Panc1 (cell line): ENCODE measurements at regions of chr11 and their contacts with region 1.

Region 1: GRCh38 chr11:117946842-117947526 is 17.8 kb upstream of the TMPRSS13 start:
- DNase-seq: peak; percentile 82
- ATAC-seq: peak; percentile 98
- H3K4me3 ChIP-seq: no peak overlapping the region
- H3K27ac ChIP-seq: no peak overlapping the region
- H3K4me1 ChIP-seq: no peaks in the 10 kb centered on the region
- H3K27me3 ChIP-seq: peaks cover 15% of the 10 kb centered on the region
- CTCF ChIP-seq: peak; percentile 98

Region 2: GRCh38 chr11:117817368-117818040 is 129.5 kb before region 1 on chr11:
- CTCF ChIA-PET with region 1: interaction called, 14 read pairs
- POLR2A ChIA-PET with region 1: no interaction called
- in situ Hi-C with region 1: no loop called
- intact Hi-C with region 1: loop called (anchors 1 kb)
- DNase-seq: peak; percentile 69
- ATAC-seq: peak; percentile 77
- H3K4me3 ChIP-seq: no peak overlapping the region
- H3K27ac ChIP-seq: 0 out of 2 replicates have a peak overlapping the region, but pooled peaks have one; percentile 4
- H3K4me1 ChIP-seq: peaks cover 20% of the 10 kb centered on the region
- H3K27me3 ChIP-seq: no peaks in the 10 kb centered on the region; the same call in 1 of the 2 replicates
- CTCF ChIP-seq: peak; percentile 100

Region 3: DNA sequence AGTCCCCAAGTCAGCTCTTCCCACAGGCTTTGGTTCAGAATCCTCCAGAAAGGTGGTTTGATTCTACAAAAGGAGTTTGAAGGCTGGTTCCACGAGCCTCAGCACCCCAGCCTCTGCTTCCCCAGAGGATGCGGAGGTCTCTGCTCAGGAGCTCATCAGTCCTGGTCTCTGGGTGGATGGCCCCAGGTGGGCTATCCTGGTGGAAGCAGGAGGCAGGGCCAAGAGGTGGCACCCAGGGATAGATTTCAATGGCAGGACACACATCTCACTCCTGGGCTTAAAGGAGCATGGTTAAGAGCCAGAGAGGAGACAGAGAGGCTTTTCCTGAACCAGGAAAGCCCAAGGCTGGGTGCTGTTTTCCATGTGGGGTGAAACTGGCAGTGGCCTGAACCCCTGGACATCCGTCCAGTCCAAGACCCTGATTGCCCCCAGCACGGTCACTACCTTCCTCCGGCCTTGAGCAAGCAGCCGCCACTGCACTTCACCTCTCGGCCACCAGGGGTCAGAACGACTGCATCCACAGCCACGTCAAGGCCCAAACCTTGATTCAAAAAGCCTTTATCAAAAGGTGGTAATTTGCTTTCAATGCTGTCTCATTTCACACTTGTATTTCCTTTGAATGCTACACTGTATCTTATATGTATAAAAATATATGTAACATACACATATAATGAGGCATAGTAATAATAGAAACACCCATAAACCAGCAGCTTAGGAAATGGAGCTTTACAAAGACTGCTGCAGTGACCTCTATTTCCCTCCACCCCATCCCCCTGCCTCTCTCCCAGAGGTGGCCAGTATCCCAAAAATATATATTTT is 103.1 kb before region 1 on chr11:
- CTCF ChIA-PET with region 1: interaction called, 34 read pairs
- POLR2A ChIA-PET with region 1: no interaction called
- in situ Hi-C with region 1: no loop called
- intact Hi-C with region 1: loop called (anchors 1 kb)
- DNase-seq: peak; percentile 54
- ATAC-seq: peak; percentile 90
- H3K4me3 ChIP-seq: no peak overlapping the region
- H3K27ac ChIP-seq: no peak overlapping the region
- H3K4me1 ChIP-seq: no peaks in the 10 kb centered on the region
- H3K27me3 ChIP-seq: peaks cover 20% of the 10 kb centered on the region
- CTCF ChIP-seq: peak; percentile 98

Region 4: GRCh38 chr11:118051611-118052461 is 104.9 kb after region 1 on chr11:
- CTCF ChIA-PET with region 1: interaction called, 12 read pairs
- POLR2A ChIA-PET with region 1: interaction called, 7 read pairs
- in situ Hi-C with region 1: no loop called
- intact Hi-C with region 1: loop called (anchors 1 kb)
- DNase-seq: no peak
- ATAC-seq: no peak
- H3K4me3 ChIP-seq: no peak overlapping the region
- H3K27ac ChIP-seq: no peak overlapping the region
- H3K4me1 ChIP-seq: no peaks in the 10 kb centered on the region
- H3K27me3 ChIP-seq: peaks cover 9% of the 10 kb centered on the region; the same call in 1 of the 2 replicates
- CTCF ChIP-seq: no peak

Region 5: DNA sequence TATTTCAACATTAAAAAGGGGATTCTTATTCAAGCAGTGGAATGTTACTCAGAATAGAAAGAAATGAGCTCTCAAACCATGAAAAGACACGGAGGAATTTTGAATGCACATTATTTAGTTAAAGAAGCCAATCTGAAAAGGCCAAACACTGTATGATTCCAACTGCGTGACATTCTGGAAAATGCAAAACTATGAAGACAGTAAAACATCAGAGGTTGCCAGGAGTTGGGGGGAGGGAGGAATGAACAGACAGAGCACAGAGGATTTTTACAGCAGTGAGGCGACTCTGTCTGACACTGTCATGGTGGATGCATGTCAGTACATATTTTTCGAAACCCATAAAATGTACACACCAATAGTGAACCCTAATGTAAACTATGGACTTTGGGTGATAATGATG is 1498.9 kb after region 1 on chr11:
- CTCF ChIA-PET with region 1: no interaction called
- POLR2A ChIA-PET with region 1: no interaction called
- in situ Hi-C with region 1: no loop called
- intact Hi-C with region 1: no loop called
- DNase-seq: no peak
- ATAC-seq: no peak
- H3K4me3 ChIP-seq: no peak overlapping the region
- H3K27ac ChIP-seq: no peak overlapping the region
- H3K4me1 ChIP-seq: no peaks in the 10 kb centered on the region
- H3K27me3 ChIP-seq: no peaks in the 10 kb centered on the region
- CTCF ChIP-seq: no peak